ENCODE measurements at regions of chrX and their contacts with region 1.

Region 1: GRCh38 chrX:40022421-40022820 is 75.3 kb downstream of the BCOR start:
- DNase-seq: no peak
- ATAC-seq: no peak
- H3K4me3 Mint-ChIP-seq: no peak overlapping the region
- H3K27ac Mint-ChIP-seq: no peak overlapping the region
- H3K4me1 Mint-ChIP-seq: peaks cover 5% of the 10 kb centered on the region; the same call in 1 of the 2 replicates
- H3K27me3 Mint-ChIP-seq: no peaks in the 10 kb centered on the region
- CTCF ChIP-seq: no peak

Region 2: GRCh38 chrX:39921838-39922237 is 100.6 kb before region 1 on chrX:
- CTCF ChIA-PET with region 1: no interaction called
- POLR2A ChIA-PET with region 1: no interaction called
- DNase-seq: no peak
- ATAC-seq: no peak
- H3K4me3 Mint-ChIP-seq: no peak overlapping the region
- H3K27ac Mint-ChIP-seq: no peak overlapping the region
- H3K4me1 Mint-ChIP-seq: peaks cover 8% of the 10 kb centered on the region; the same call in 1 of the 2 replicates
- H3K27me3 Mint-ChIP-seq: no peaks in the 10 kb centered on the region; the same call in 1 of the 2 replicates
- CTCF ChIP-seq: no peak

Region 3: GRCh38 chrX:39984191-39984956 is 38.0 kb before region 1 on chrX:
- CTCF ChIA-PET with region 1: no interaction called
- POLR2A ChIA-PET with region 1: no interaction called
- DNase-seq: no peak
- ATAC-seq: peak; percentile 30; the same call in 1 of the 2 replicates
- H3K4me3 Mint-ChIP-seq: no peak overlapping the region
- H3K27ac Mint-ChIP-seq: no peak overlapping the region
- H3K4me1 Mint-ChIP-seq: peaks cover 22% of the 10 kb centered on the region
- H3K27me3 Mint-ChIP-seq: no peaks in the 10 kb centered on the region
- CTCF ChIP-seq: no peak

Region 4: GRCh38 chrX:40090050-40090804 is 67.8 kb after region 1 on chrX:
- CTCF ChIA-PET with region 1: no interaction called
- POLR2A ChIA-PET with region 1: interaction called, 10 read pairs
- DNase-seq: no peak
- ATAC-seq: peak; percentile 5
- H3K4me3 Mint-ChIP-seq: peak overlapping the region; percentile 86
- H3K27ac Mint-ChIP-seq: no peak overlapping the region
- H3K4me1 Mint-ChIP-seq: peaks cover 55% of the 10 kb centered on the region
- H3K27me3 Mint-ChIP-seq: peaks cover 24% of the 10 kb centered on the region
- CTCF ChIP-seq: no peak

Region 5: GRCh38 chrX:40266490-40267333 is 244.3 kb after region 1 on chrX:
- CTCF ChIA-PET with region 1: no interaction called
- POLR2A ChIA-PET with region 1: interaction called, 12 read pairs
- DNase-seq: peak; percentile 66
- ATAC-seq: peak; percentile 92
- H3K4me3 Mint-ChIP-seq: peak overlapping the region; percentile 58
- H3K27ac Mint-ChIP-seq: no peak overlapping the region
- H3K4me1 Mint-ChIP-seq: peaks cover 12% of the 10 kb centered on the region
- H3K27me3 Mint-ChIP-seq: peaks cover 12% of the 10 kb centered on the region
- CTCF ChIP-seq: no peak